Activated naive CD8-positive, alpha-beta T cell treated with anti-CD3 and anti-CD28 coated beads, Interleukin-2, amount 10 ng/mL, durations not matched to agents 7 days and 5 days (primary cell): ENCODE measurements at regions of chr1 and their contacts with region 1.

Region 1: DNA sequence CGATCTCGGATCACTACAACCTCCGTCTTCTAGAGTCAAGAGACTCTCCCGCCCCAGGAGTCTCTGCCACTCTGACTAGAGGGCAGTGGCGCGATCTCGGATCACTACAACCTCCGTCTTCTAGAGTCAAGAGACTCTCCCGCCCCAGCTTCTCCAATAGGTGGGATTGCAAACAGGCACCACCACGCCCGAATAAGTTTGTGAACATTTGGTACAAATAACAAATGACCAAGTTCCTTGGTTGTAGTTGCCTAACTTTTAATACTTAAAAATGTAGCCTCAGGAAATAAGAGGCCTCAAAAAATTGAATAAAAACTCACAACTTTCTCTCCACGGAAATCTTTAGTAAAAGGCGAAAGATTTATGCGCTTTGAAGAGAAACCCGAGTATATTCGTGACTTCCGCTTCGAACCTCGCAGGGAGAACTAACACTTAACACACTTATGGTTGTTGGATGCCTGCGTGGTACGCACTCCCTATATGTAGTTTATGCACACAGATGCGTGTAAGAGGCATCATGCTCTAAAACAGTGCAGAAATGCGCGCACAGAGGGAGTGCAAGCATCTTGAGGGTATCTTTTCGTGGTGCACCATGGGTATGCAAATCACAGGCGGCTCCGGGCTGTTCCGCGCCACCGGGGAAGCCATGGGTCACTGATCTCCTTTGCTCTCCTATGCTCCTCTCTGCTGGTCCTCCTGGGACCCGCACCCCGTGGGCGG is 11.4 kb downstream of the BTBD19 start:
- DNase-seq: peak; percentile 84
- ATAC-seq: peak; percentile 88
- H3K4me3 Mint-ChIP-seq: peak overlapping the region; percentile 92
- H3K27ac Mint-ChIP-seq: peak overlapping the region; percentile 99
- H3K4me1 Mint-ChIP-seq: peaks cover 36% of the 10 kb centered on the region
- H3K27me3 Mint-ChIP-seq: no peaks in the 10 kb centered on the region

Region 2: GRCh38 chr1:44472620-44473525 is 346.9 kb before region 1 on chr1:
- POLR2A ChIA-PET with region 1: no interaction called
- DNase-seq: no peak
- ATAC-seq: peak; percentile 39
- H3K4me3 Mint-ChIP-seq: peak overlapping the region; percentile 55
- H3K27ac Mint-ChIP-seq: no peak overlapping the region
- H3K4me1 Mint-ChIP-seq: peaks cover 9% of the 10 kb centered on the region
- H3K27me3 Mint-ChIP-seq: peaks cover 14% of the 10 kb centered on the region

Region 3: DNA sequence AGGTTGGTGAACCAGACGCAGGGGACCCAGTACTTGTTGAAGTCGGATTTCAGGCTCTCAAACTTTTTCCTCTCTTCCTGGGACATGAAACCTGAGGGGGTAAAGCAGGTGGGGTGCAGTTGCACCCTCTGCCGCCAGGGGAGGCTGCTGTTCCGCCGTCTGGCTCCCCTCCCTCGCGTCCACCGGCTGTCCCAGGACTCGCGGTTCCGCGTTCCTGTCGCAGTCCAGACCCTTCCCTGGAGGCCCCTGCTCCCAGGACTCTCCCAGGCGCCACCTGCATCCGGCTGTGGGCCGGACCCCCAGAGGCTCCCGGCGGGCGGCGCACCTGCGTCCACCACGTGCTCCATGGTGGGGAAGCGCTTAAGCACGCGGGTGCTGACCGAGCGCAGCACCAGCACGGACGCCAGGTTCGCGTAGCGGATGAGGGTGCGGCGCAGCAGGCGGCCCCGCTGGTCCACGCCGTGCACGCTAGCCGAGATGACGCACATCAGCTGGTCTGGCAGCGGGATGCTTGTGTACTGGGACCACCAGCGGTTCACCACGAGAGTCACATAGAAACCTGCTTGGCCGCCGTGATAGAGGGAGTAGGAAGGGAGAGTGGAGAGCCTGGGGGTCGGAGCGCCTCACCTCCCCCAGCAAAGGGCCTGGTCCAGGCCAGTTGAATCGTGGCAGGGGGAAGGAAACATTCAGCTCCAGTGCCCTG is 33.5 kb before region 1 on chr1:
- POLR2A ChIA-PET with region 1: interaction called, 60 read pairs
- DNase-seq: peak; percentile 87
- ATAC-seq: peak; percentile 69
- H3K4me3 Mint-ChIP-seq: peak overlapping the region; percentile 66
- H3K27ac Mint-ChIP-seq: peak overlapping the region; percentile 71
- H3K4me1 Mint-ChIP-seq: peaks cover 26% of the 10 kb centered on the region
- H3K27me3 Mint-ChIP-seq: no peaks in the 10 kb centered on the region

Region 4: GRCh38 chr1:44792783-44793714 is 26.7 kb before region 1 on chr1:
- POLR2A ChIA-PET with region 1: interaction called, 360 read pairs
- DNase-seq: peak; percentile 24
- ATAC-seq: no peak
- H3K4me3 Mint-ChIP-seq: no peak overlapping the region
- H3K27ac Mint-ChIP-seq: no peak overlapping the region
- H3K4me1 Mint-ChIP-seq: no peaks in the 10 kb centered on the region
- H3K27me3 Mint-ChIP-seq: no peaks in the 10 kb centered on the region

Region 5: DNA sequence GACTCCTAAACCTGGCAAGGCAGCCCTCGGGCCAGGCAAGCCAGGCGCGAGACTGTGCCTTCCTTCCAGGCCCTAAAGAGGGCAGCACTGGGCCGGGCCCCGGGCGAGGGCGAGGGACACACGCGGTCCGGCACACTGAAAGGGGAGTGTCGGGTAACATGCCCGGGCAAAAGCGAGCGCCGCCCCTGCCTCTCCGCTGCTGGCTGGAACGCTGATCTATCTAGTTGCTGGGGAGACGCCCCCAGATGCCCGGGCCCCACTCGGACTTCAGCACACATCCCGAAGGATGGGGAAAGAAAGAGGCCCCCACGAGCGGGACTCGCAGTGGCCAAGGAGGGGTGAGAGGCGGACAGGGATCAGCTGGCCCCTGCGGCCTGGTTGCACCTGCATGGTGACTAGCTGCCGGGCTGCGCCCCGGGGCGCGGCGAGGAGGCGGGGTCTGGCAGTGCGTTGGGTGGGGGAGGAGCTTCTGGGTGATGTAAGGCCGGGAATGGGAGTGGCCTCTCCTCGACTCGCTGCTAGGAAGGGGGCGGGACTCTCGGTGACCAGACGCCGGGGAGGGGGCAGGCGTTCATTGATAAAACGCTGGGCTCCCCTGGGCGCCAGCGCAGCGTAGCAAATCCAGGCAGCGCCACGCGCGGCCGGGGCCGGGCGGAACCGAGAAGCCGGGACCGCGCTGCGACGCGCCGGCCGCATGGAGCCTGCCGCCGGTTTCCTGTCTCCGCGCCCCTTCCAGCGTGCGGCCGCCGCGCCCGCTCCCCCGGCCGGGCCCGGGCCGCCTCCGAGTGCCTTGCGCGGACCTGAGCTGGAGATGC is 19.8 kb before region 1 on chr1 and contains the start of gene PLK3:
- POLR2A ChIA-PET with region 1: interaction called, 360 read pairs
- DNase-seq: peak; percentile 96
- ATAC-seq: peak; percentile 77
- H3K4me3 Mint-ChIP-seq: peak within 1 kb of the TSS; percentile 92
- H3K27ac Mint-ChIP-seq: peak within 1 kb of the TSS; percentile 97
- H3K4me1 Mint-ChIP-seq: peaks cover 24% of the 10 kb centered on the region
- H3K27me3 Mint-ChIP-seq: no peaks in the 10 kb centered on the region
- total RNA-seq, gene PLK3: 68.8 to 70.7 TPM

Region 6: GRCh38 chr1:44807262-44808062 is 12.3 kb before region 1 on chr1 and contains the start of gene DYNLT4:
- POLR2A ChIA-PET with region 1: interaction called, 360 read pairs
- DNase-seq: peak; percentile 84
- ATAC-seq: peak; percentile 61
- H3K4me3 Mint-ChIP-seq: peak within 1 kb of the TSS; percentile 78
- H3K27ac Mint-ChIP-seq: peak within 1 kb of the TSS; percentile 99
- H3K4me1 Mint-ChIP-seq: peaks cover 55% of the 10 kb centered on the region
- H3K27me3 Mint-ChIP-seq: no peaks in the 10 kb centered on the region
- total RNA-seq, gene DYNLT4: 0.43 to 0.97 TPM

Region 7: GRCh38 chr1:44985747-44986359 is 166.1 kb after region 1 on chr1:
- POLR2A ChIA-PET with region 1: interaction called, 11 read pairs
- DNase-seq: no peak
- ATAC-seq: peak; percentile 6
- H3K4me3 Mint-ChIP-seq: peak overlapping the region; percentile 100
- H3K27ac Mint-ChIP-seq: peak overlapping the region; percentile 97
- H3K4me1 Mint-ChIP-seq: peaks cover 20% of the 10 kb centered on the region
- H3K27me3 Mint-ChIP-seq: no peaks in the 10 kb centered on the region